ENCODE measurements at regions of chr6 and their contacts with region 1.

Region 1: DNA sequence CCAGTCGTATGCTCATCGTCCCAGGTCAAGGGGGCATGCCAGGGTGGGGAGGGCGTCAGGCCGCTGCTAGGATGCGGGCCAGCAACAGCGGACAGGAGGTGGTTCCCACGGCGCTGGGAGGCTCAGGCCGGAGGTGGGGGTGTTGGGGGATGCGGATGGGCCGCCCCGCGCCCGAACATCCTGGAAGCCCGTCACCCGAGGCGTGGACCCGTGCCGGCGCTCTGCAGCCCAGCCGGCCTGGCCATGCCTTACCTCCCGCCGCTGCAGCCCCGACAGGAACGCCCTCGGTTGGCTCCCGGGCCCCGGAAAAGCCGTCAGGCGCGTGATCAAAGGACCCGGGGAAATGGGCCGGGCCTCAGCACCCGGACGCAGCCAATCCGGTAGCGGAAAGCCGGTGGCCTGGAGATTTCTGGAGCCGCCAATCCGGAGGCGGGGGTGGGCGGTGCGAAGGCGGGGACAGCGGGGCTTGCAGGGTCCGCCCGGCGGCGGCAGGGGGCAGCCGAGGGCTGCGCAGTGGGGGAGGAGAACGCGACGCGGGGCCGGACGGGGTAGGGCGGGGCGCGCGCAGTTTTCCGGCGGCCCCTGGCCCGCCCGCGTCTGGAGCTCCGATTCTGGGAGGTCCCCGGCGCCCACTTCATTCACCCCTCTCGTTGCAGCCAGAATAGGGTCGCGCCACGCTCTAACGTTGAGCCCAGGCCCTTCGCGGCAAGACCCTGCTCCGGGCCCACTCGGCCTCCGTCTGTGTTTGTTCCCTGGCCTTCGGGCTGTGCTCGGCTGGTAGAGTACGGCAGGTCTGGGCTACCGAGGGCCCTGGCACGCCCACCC is at the start of gene SMIM29:
- DNase-seq: peak; percentile 98
- ATAC-seq: peak; percentile 68
- H3K4me3 Mint-ChIP-seq: peak within 1 kb of the TSS; percentile 88
- H3K27ac Mint-ChIP-seq: peak within 1 kb of the TSS; percentile 83
- H3K4me1 Mint-ChIP-seq: peaks cover 29% of the 10 kb centered on the region
- H3K27me3 Mint-ChIP-seq: no peaks in the 10 kb centered on the region
- CTCF ChIP-seq: peak; percentile 65
- total RNA-seq, gene SMIM29: 11.7 to 15.1 TPM (median 14.1 TPM) in 3 replicates

Region 2: GRCh38 chr6:34196126-34196830 is 52.7 kb before region 1 on chr6:
- CTCF ChIA-PET with region 1: interaction called, 24 read pairs
- POLR2A ChIA-PET with region 1: interaction called, 10 read pairs
- DNase-seq: peak; percentile 81
- ATAC-seq: peak; percentile 64
- H3K4me3 Mint-ChIP-seq: peak overlapping the region; percentile 65
- H3K27ac Mint-ChIP-seq: no peak overlapping the region
- H3K4me1 Mint-ChIP-seq: peaks cover 28% of the 10 kb centered on the region
- H3K27me3 Mint-ChIP-seq: peaks cover 4% of the 10 kb centered on the region
- CTCF ChIP-seq: peak; percentile 81

Region 3: DNA sequence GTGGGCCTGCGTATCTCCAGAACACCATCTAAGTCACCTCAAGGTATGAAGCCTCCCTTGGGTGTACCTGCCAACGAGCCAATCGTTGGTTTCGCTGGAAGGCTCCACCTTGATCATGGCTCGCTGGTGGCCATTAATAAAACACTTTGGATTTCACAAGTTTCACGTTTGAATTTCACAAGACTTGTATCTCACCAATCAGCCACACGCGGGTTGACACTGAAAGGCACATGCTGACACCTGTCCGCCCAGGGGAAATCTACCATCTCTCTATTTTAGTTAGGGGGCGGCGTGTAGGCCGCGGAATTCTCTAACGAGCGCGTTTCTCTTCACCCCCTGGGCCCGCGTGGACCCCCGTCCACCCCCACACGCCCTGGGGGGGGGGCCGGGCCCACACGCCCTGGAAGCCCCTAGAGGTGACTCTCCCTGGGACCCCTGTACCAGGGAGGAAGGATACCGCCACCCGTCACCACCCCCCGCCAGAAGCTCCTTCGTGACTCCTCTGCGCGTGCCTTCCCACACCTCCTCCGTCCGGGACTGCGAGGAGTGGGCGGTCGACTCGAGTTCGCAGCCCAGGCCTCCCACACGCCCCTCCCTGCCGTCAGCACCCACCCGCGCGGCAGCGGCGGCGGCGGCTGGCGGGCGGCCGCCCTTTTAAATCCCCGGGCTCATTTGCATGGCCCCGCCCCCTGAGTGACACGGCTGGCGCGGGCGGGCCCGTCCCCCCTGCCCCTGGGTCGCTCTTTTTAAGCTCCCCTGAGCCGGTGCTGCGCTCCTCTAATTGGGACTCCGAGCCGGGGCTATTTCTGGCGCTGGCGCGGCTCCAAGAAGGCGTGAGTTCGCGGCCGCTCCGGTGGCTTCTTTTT is 12.6 kb before region 1 on chr6 and contains the start of gene HMGA1:
- CTCF ChIA-PET with region 1: interaction called, 8 read pairs
- POLR2A ChIA-PET with region 1: interaction called, 15 read pairs
- DNase-seq: peak; percentile 88
- ATAC-seq: peak; percentile 34
- H3K4me3 Mint-ChIP-seq: peak within 1 kb of the TSS; percentile 93
- H3K27ac Mint-ChIP-seq: peak within 1 kb of the TSS; percentile 100
- H3K4me1 Mint-ChIP-seq: peaks cover 52% of the 10 kb centered on the region
- H3K27me3 Mint-ChIP-seq: no peaks in the 10 kb centered on the region
- CTCF ChIP-seq: no peak
- total RNA-seq, gene HMGA1: 2,446 to 2,677 TPM (median 2,610 TPM) in 3 replicates

Region 4: DNA sequence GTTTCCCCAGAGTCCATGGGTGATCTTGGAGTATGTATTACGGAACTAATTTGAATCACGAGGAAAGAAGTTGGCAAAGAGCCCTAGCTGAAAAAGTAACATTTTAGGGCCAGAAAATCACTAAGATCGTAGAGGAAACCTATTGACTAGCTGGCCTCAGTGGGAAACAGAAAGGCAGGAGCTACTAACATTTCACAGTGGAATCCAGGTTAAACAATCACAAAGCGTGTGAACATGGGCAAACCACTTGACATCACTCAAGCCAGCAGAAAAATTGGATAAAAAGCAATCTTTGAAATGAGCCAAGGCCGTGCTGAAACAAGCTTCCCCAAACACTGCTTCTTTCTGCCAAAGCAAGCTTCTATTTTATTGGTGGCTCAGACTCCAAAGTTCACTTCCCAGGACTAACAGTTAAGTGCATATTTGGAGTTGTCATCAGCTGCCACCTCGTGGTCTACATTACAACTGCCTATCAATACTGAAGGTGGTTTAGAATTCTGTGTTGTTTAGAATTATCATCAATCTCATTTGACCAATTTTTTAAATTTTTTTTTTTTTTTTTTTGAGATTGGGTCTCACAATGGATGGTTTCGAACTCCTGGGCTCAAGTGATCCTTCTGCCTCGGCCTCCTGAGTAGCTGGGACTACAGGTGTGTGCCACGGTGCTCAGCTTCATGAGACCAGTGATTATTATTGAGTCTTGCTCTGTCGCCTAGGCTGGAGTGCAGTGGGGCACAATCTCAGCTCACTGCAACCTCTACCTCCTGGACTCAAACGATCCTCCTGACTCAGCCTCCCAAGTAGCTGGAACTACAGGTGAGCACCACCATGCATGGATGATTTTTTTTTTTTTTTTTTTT is 166.3 kb after region 1 on chr6:
- CTCF ChIA-PET with region 1: interaction called, 51 read pairs
- POLR2A ChIA-PET with region 1: interaction called, 8 read pairs
- DNase-seq: no peak
- ATAC-seq: peak; percentile 13
- H3K4me3 Mint-ChIP-seq: no peak overlapping the region
- H3K27ac Mint-ChIP-seq: peak overlapping the region; percentile 59; the same call in 1 of the 2 replicates
- H3K4me1 Mint-ChIP-seq: no peaks in the 10 kb centered on the region
- H3K27me3 Mint-ChIP-seq: no peaks in the 10 kb centered on the region
- CTCF ChIP-seq: no peak

Region 5: GRCh38 chr6:34459899-34460593 is 211.1 kb after region 1 on chr6:
- CTCF ChIA-PET with region 1: interaction called, 10 read pairs
- POLR2A ChIA-PET with region 1: no interaction called
- DNase-seq: peak; percentile 63
- ATAC-seq: peak; percentile 52
- H3K4me3 Mint-ChIP-seq: no peak overlapping the region
- H3K27ac Mint-ChIP-seq: no peak overlapping the region
- H3K4me1 Mint-ChIP-seq: peaks cover 26% of the 10 kb centered on the region
- H3K27me3 Mint-ChIP-seq: peaks cover 4% of the 10 kb centered on the region
- CTCF ChIP-seq: peak; percentile 72